H1 (cell line): ENCODE measurements at regions of chr1 and their contacts with region 1.

Region 1: DNA sequence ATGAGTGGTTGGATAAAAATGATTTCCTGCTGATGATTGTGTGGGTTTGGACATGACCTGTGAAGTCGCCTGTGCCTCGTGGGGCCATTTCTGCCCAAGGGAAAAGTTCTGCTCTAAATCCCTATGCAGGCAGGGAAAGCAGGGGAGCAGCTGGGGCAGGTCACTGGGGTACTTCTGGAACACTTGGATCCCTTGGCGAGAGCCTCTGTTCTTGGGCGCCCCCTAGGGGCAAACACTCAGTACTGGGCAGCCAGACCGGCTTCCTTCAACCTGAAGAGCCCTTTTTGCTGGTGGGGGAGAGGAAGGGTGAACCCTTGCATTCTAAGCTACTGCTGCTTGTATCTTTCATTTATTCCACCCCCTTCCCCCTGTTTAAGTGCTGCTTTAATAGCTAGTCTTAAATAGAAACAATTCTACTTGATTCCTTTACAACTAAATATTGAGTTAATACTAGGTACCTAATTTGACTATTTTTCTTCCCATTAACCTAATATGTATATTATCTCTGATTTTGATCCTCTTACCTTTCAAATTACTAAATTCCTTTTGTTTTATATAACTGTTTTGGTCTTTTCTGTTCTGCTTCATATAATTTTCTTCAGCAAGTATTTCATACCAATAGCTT is 5.1 kb upstream of the CLEC20A start:
- DNase-seq: peak; percentile 56 to 96
- H3K4me3 ChIP-seq: no peak overlapping the region
- H3K27ac ChIP-seq: no peak overlapping the region
- H3K4me1 ChIP-seq: no peaks in the 10 kb centered on the region; a peak in 1 of 7 replicates
- H3K27me3 ChIP-seq: no peaks in the 10 kb centered on the region
- CTCF ChIP-seq: peak; percentile 84 to 95 (median 87)
- EP300 ChIP-seq: no peak
- POLR2A ChIP-seq: no peak
- RAD21 ChIP-seq: peak; percentile 70 to 79

Region 2: DNA sequence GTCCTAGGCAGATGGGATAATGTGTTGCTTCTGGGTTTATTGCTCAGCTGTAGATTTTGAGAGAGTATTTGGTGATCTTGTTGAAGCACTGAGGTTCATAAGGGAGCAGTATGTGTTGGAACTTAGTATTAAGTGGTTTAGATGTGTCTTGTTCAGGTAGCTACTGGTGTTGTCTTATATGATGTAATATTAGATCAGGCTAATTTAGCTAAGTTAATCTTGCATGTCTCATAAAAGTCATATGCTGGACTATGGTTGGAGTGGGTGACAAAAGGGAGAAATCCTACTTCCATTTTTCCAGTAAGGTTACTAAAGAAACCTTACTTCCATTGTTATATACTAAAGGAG is 201.5 kb before region 1 on chr1:
- CTCF ChIA-PET with region 1: interaction called, 17 read pairs
- POLR2A ChIA-PET with region 1: no interaction called
- DNase-seq: no peak
- H3K4me3 ChIP-seq: no peak overlapping the region
- H3K27ac ChIP-seq: no peak overlapping the region
- H3K4me1 ChIP-seq: peaks cover 0 to 2% (median 0%) of the 10 kb centered on the region in 4 experiments; a peak in 3 of 7 replicates
- H3K27me3 ChIP-seq: no peaks in the 10 kb centered on the region
- CTCF ChIP-seq: no peak
- EP300 ChIP-seq: no peak
- POLR2A ChIP-seq: no peak
- RAD21 ChIP-seq: no peak

Region 3: GRCh38 chr1:178344513-178345082 is 157.2 kb before region 1 on chr1:
- CTCF ChIA-PET with region 1: interaction called, 14 read pairs
- POLR2A ChIA-PET with region 1: no interaction called
- DNase-seq: no peak
- H3K4me3 ChIP-seq: no peak overlapping the region; a peak in 1 of 8 replicates
- H3K27ac ChIP-seq: no peak overlapping the region
- H3K4me1 ChIP-seq: peaks cover 0 to 17% (median 11%) of the 10 kb centered on the region in 4 experiments; a peak in 4 of 7 replicates
- H3K27me3 ChIP-seq: no peaks in the 10 kb centered on the region
- CTCF ChIP-seq: peak in 2 of 3 experiments; percentile 33 to 57; a peak in 2 of 4 replicates
- EP300 ChIP-seq: no peak
- POLR2A ChIP-seq: no peak
- RAD21 ChIP-seq: peak; percentile 47 to 55

Region 4: DNA sequence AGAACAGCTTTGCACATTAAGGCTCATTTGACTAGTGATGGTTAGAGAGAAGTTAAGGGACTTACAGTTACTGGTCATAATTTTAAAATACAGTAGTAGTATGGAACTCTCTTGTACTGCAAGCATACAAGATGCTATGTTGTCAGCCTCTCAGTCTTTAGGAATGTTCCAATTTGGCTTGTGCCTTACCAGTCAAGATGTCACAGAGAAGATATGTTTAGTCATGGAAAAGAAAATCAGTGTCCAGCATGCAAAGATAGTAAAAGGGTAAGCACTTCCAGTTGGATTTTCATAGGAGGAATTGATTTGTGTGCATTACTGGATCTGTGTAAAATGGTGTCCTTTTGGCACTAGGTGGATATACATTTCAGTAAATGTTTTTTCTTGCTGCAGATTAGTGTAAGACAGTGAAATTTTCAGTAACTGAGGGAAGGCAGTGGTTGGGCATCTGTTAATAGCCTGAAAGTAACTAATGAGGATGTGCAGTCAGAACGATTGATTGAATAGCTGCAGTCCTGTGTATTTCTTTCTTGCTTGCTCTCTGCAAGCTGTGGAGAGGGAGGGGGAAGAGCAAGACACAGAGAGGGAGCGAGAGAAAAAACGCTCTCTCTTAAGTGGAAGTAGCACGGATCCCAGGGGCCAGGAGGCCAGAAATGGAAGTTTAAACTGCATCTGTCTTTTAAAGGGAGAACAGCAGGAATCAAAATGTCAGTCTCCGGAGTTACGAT is 113.2 kb before region 1 on chr1:
- CTCF ChIA-PET with region 1: interaction called, 18 read pairs
- POLR2A ChIA-PET with region 1: no interaction called
- DNase-seq: no peak
- H3K4me3 ChIP-seq: no peak overlapping the region
- H3K27ac ChIP-seq: 0 out of 2 replicates have a peak overlapping the region, but pooled peaks have one; percentile 10
- H3K4me1 ChIP-seq: no peaks in the 10 kb centered on the region
- H3K27me3 ChIP-seq: no peaks in the 10 kb centered on the region
- CTCF ChIP-seq: no peak
- EP300 ChIP-seq: no peak
- POLR2A ChIP-seq: no peak
- RAD21 ChIP-seq: no peak

Region 5: GRCh38 chr1:178465011-178465410 is 36.8 kb before region 1 on chr1:
- CTCF ChIA-PET with region 1: interaction called, 95 read pairs
- POLR2A ChIA-PET with region 1: no interaction called
- DNase-seq: no peak
- H3K4me3 ChIP-seq: no peak overlapping the region
- H3K27ac ChIP-seq: no peak overlapping the region
- H3K4me1 ChIP-seq: no peaks in the 10 kb centered on the region
- H3K27me3 ChIP-seq: no peaks in the 10 kb centered on the region
- CTCF ChIP-seq: no peak
- EP300 ChIP-seq: no peak
- POLR2A ChIP-seq: no peak
- RAD21 ChIP-seq: no peak

Region 6: GRCh38 chr1:178513278-178514022 is 11.6 kb after region 1 on chr1:
- CTCF ChIA-PET with region 1: interaction called, 238 read pairs
- POLR2A ChIA-PET with region 1: interaction called, 3 read pairs
- DNase-seq: no peak
- H3K4me3 ChIP-seq: no peak overlapping the region
- H3K27ac ChIP-seq: no peak overlapping the region
- H3K4me1 ChIP-seq: peaks cover 0 to 2% (median under 1%) of the 10 kb centered on the region in 4 experiments; a peak in 1 of 7 replicates
- H3K27me3 ChIP-seq: no peaks in the 10 kb centered on the region
- CTCF ChIP-seq: peak in 2 of 3 experiments; percentile 13 to 44; a peak in 2 of 4 replicates
- EP300 ChIP-seq: no peak
- POLR2A ChIP-seq: no peak
- RAD21 ChIP-seq: peak in 1 of 2 experiments; percentile 15; a peak in 2 of 4 replicates